GM12878 (cell line): ENCODE measurements at regions of chr9 and their contacts with region 1.

Region 1: DNA sequence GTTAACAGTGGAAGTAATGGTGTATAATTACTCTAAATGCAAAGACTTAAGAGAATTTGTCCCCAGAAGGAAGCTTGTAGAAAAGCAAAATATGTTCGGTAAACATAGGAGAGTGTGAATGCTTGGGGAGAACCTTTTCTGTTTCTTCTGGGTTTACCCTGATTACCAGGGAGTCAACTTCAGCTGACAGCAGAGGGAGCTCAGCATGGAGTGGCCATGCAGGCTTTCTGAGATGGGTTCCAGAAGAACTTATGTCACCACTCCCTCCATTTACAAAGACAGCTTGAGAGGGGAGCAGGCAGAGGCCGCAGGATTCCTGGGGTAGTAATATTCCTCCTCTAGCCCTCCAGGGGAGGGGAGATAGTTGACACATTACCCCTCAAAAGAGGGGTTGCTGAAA is 95.7 kb downstream of the SLC28A3 start:
- DNase-seq: no peak
- ATAC-seq: no peak
- H3K4me3 ChIP-seq: no peak overlapping the region
- H3K27ac ChIP-seq: no peak overlapping the region
- H3K4me1 ChIP-seq: no peaks in the 10 kb centered on the region
- H3K27me3 ChIP-seq: no peaks in the 10 kb centered on the region
- CTCF ChIP-seq: no peak
- EP300 ChIP-seq: no peak
- POLR2A ChIP-seq: no peak
- RAD21 ChIP-seq: no peak

Region 2: DNA sequence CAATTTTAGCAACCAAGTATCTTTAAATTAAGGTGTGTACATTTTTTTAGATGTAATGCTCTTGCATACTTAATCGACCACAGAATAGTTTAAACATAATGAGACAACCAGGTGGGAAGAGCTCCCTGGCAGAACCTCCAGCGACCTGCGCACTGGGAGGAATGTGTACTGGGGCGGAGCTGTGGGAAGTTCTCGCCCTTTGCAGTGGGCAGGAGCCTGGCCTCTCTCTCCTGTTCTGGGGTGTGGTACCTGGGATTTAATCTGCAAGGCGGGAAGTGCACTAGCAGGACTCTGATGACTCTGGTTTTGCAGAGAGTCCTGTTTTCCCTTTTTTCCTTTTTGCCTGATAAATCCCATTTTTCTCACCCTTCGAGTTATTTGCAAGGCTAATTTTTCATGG is 54.9 kb before region 1 on chr9:
- CTCF ChIA-PET with region 1: no interaction called
- POLR2A ChIA-PET with region 1: no interaction called
- RAD21 ChIA-PET with region 1: no interaction called
- SMC1A ChIA-PET with region 1: no interaction called
- in situ Hi-C with region 1: loop called (anchors 5 kb)
- intact Hi-C with region 1: no loop called
- DNase-seq: no peak
- ATAC-seq: no peak
- H3K4me3 ChIP-seq: no peak overlapping the region
- H3K27ac ChIP-seq: no peak overlapping the region
- H3K4me1 ChIP-seq: no peaks in the 10 kb centered on the region
- H3K27me3 ChIP-seq: no peaks in the 10 kb centered on the region; a peak in 2 of 4 replicates
- CTCF ChIP-seq: no peak
- EP300 ChIP-seq: no peak
- POLR2A ChIP-seq: no peak
- RAD21 ChIP-seq: no peak

Region 3: DNA sequence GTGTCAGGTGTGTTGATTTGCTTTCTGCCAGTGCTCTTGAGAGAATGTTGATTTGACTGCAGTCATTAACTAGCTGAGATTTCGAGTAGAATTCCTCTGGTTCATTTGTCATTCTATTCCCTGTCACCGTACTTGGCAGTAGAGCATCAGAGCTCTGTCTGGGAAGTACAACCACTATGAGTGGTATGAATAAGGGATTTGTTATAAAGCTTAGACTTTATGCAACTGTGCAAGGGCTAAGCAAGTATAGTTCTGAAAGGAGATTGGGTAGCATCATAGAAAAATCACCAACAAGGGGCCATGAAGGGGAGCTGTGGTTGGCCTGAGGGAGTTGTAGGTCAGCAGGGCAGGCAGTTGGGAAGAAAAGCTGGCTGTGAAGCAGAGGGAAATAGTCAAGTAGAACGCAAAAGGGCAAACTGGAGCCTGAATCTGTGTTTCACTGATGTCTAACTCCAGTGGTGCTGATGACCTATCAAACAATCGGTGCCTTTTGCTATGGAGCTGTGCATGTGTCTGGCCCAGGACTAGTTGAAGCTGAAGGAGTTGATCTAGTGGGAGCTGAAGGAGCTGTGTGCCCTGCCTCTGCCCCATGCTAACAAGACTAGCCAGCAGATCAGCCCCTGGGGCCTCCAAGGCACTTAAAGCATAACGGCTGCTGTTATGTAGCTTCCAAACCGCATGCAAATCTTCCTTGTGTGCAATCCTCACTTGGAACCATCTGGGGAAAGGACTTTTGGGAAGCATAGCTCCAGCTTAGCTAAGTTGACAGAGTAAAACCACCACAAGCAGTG is 14.3 kb before region 1 on chr9:
- CTCF ChIA-PET with region 1: interaction called, 13 read pairs
- POLR2A ChIA-PET with region 1: interaction called, 3 read pairs
- RAD21 ChIA-PET with region 1: no interaction called
- SMC1A ChIA-PET with region 1: interaction called, 4 read pairs
- in situ Hi-C with region 1: no loop called
- intact Hi-C with region 1: no loop called
- DNase-seq: no peak
- ATAC-seq: no peak
- H3K4me3 ChIP-seq: no peak overlapping the region
- H3K27ac ChIP-seq: no peak overlapping the region
- H3K4me1 ChIP-seq: no peaks in the 10 kb centered on the region
- H3K27me3 ChIP-seq: no peaks in the 10 kb centered on the region
- CTCF ChIP-seq: no peak
- EP300 ChIP-seq: no peak
- POLR2A ChIP-seq: no peak
- RAD21 ChIP-seq: no peak